ENCODE measurements at regions of chr1 and their contacts with region 1.

Region 1: GRCh38 chr1:21594935-21595897 is 73.9 kb downstream of the RAP1GAP start:
- H3K4me3 ChIP-seq: no peak overlapping the region
- H3K27ac ChIP-seq: no peak overlapping the region
- H3K4me1 ChIP-seq: no peaks in the 10 kb centered on the region
- CTCF ChIP-seq: peak; percentile 70

Region 2: DNA sequence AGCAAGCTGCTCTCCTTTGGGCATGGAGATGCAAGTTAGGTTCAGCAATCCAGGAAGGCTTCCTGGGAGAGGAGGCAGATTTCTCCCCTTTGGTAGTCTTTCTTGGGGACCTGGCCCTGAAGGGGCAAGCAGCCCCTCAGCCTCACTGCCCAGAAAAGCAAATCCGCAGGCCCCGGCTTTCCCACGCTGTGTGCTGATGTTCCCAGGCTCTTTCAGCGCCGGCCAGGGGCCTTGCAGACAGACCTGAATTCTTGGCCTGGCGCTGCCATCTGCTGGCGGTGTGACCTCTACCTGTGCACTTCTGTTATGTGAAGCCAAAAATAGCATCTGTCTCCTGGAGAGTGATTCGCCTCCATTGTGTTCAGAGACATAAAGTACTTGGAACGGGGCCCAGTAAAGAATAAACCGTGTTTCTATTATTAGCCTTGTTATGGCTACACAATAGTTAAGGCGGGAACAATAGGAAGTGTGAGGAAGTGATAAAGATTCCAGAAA is 21.2 kb before region 1 on chr1:
- CTCF ChIA-PET with region 1: interaction called, 10 read pairs
- POLR2A ChIA-PET with region 1: no interaction called
- H3K4me3 ChIP-seq: no peak overlapping the region
- H3K27ac ChIP-seq: no peak overlapping the region; the same call in 1 of the 2 replicates
- H3K4me1 ChIP-seq: no peaks in the 10 kb centered on the region; the same call in 1 of the 2 replicates
- CTCF ChIP-seq: peak; percentile 60

Region 3: DNA sequence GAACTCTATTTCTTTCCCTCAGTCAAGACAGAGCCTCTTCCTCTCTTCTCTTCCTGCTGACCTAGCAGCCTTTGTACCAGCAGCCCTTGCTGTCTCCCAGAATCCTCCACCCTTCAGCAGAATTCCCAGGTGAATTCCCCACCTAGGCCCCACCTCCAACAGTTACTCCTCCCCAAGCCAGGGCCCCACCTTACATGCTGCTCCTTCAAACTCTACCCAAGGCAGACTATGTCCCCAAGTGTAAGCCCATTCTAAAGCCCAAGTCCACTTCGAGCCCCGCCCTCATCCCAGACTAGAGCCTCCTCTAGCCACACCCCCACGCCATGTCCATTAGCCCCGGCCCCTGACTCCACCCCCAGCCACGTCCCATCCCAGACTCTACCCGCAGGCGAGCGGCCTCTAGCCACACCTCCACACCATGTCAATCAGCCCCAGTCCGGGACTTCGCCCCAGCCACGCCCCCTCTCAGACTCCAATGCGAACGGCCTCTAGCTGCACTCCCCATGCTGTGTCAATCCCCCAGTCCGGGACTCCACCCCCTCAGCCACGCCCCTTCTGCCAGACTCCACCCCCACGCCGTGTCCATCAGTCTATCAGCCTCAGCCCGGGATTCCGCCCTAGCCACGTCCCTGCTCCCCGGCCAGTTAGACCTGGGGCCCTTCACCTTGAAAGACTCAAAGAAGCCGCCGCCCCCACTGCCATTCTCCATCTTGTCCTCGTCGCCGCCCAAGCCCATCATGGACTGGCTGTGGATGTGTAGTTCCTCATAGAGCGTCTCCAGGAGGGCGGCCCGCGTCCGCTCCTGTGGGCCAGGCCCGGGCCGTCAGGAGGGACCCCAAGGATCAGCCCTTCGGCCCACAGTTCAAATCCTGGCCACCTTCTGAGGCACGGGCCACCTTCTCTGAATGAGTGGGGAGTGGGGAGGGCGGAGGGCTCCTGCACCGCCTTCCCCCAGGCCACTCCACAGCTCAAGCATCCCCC is 12.6 kb after region 1 on chr1:
- CTCF ChIA-PET with region 1: no interaction called
- POLR2A ChIA-PET with region 1: no interaction called
- H3K4me3 ChIP-seq: no peak overlapping the region
- H3K27ac ChIP-seq: no peak overlapping the region
- H3K4me1 ChIP-seq: no peaks in the 10 kb centered on the region
- CTCF ChIP-seq: no peak

Measured in HEK293 (cell line).